ENCODE measurements at regions of chr3 and their contacts with region 1.

Region 1: DNA sequence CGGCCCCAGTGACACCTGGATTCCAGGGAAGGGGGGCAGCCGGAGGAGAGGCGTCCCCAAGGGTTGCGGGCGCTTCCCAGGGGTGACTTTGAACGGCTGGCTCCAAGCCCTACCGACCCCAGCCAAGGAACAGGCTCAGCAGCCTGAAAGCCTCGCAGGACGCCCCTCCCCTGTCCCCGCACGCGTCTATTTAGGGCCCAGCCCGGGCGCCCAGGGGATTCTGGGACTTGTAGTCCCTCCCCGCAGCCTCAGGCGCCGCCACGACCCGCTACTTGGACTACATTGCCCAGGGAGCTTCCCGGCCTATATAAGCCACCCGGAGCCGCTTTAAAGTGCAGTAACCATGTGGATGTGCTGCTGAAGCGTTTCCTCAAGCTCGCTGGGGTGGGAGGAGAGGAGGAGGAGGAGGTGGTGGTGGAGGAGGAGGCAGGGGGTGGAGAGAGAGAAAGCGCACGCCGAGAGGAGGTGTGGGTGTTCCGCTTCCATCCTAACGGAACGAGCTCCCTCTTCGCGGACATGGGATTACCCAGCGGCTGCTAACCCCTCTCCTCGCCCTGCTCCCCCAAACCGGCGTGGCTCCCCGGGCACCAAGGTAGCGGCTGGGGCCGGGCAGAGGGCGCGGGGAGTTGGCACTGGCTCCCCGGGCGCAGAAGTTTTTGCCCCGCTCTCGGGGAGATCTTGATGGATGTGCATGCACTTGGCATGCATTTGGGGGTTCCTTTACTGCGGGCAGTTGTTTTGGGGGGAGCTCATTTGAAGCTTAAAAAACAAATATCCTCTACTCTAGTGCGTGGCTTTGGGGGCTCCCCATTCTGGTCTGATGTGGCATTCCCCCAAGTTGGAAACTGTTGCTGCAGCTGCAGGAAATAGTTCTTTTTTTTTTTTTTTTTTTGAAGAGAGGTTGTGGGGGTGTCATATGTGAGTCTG is at the start of gene ITPR1:
- DNase-seq: peak; percentile 93
- ATAC-seq: peak; percentile 94
- H3K4me3 ChIP-seq: peak within 1 kb of the TSS; percentile 58 to 61
- H3K27ac ChIP-seq: peak within 1 kb of the TSS; percentile 16; the same call in 1 of the 2 replicates
- H3K4me1 ChIP-seq: peaks cover 2 to 19% of the 10 kb centered on the region in 2 experiments; a peak in 2 of 4 replicates
- H3K27me3 ChIP-seq: peaks cover 42% of the 10 kb centered on the region
- CTCF ChIP-seq: no peak
- POLR2A ChIP-seq: peak; percentile 98
- RAD21 ChIP-seq: no peak
- total RNA-seq, gene ITPR1: 9.2 TPM

Region 2: DNA sequence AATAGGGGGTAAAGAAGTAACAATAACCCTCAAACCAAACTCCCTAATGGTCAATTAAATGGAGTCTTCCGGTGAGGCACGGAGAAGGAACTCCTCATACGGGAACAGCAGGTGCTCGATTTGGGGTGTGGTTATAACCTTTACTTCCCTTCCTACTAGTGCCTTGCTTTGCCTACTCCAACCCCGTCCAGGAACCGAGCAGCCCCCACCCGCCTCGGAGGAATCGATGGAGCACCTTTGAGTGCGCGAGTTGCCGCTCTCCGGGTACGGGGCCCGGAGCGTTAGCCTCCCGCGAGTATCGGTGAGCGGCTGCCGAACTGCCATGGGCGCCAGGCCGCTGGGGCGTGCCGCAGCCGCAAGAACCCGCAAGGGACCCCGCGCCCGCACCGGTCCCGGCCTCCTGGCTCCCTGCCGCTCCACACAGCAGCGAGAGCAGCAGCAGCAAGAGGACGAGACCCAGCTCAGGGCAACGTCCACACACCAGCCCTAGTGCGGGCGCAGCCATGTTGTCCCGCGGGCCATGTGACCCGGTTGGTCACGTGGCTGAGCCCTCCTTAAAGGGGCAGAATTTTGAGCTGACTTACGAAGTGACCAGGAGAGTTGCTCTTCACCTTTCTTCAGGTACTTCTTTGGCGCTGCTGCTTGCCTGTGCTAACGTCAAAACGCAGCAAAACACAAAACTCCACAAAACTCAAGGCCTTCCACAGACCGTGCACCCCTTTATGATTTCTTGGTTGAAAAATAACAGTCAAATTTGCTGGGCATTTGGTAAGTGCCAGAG is 26.3 kb before region 1 on chr3 and contains the start of gene SUMF1:
- CTCF ChIA-PET with region 1: no interaction called
- POLR2A ChIA-PET with region 1: interaction called, 13 read pairs
- RAD21 ChIA-PET with region 1: interaction called in 1 of 2 experiments, 3 read pairs
- intact Hi-C with region 1: loop called (anchors 2 kb)
- DNase-seq: peak; percentile 59
- ATAC-seq: peak; percentile 95
- H3K4me3 ChIP-seq: peak within 1 kb of the TSS; percentile 87 to 89
- H3K27ac ChIP-seq: peak within 1 kb of the TSS; percentile 64
- H3K4me1 ChIP-seq: peaks cover 0 to 10% of the 10 kb centered on the region in 2 experiments; a peak in 2 of 4 replicates
- H3K27me3 ChIP-seq: no peaks in the 10 kb centered on the region
- CTCF ChIP-seq: no peak
- POLR2A ChIP-seq: peak; percentile 77
- RAD21 ChIP-seq: no peak
- total RNA-seq, gene SUMF1: 26.6 TPM

Region 3: DNA sequence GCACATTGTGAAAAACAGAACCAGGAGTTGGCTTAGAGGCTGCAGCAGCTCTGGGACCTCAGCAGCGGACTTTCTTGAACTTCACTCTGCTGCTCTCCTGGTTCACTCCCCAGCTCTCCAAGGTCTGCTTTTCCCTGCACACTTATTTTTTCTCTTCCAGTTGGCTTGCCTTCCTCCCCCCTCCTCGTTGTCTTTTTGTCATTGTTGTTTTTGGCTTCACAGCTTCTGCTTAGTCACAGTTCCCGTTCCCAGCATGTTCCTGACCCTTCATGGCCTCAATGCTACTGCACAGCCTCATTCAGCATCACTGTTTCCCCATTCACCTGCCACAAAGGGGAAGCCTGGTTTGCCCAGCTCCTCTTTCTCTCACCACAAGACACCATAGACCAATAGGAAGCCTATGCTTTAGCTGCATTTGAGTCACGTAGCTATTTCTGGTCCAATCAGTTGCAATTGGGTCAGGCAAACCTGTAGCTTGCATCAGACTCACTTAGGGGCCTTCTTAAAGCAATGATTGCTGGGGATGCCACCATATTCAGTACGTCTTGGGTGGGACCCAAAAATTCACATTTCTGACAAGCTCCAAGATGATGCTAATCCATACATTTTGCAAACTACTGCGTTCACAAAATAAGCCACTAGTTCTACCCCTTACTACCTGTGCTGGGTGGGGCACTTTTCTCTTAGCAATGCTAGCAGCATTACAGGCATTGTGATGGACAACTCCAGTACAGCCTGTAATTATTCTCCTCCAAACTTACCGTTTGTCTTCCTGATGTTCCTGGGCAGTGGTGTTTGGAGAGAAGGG is 18.4 kb before region 1 on chr3:
- CTCF ChIA-PET with region 1: no interaction called
- POLR2A ChIA-PET with region 1: interaction called, 12 read pairs
- RAD21 ChIA-PET with region 1: no interaction called
- intact Hi-C with region 1: no loop called
- DNase-seq: no peak
- ATAC-seq: peak; percentile 69
- H3K4me3 ChIP-seq: no peak overlapping the region
- H3K27ac ChIP-seq: no peak overlapping the region
- H3K4me1 ChIP-seq: peaks cover 7 to 9% of the 10 kb centered on the region in 2 experiments; a peak in 3 of 4 replicates
- H3K27me3 ChIP-seq: peaks cover 20% of the 10 kb centered on the region
- CTCF ChIP-seq: no peak
- POLR2A ChIP-seq: no peak
- RAD21 ChIP-seq: no peak

Region 4: DNA sequence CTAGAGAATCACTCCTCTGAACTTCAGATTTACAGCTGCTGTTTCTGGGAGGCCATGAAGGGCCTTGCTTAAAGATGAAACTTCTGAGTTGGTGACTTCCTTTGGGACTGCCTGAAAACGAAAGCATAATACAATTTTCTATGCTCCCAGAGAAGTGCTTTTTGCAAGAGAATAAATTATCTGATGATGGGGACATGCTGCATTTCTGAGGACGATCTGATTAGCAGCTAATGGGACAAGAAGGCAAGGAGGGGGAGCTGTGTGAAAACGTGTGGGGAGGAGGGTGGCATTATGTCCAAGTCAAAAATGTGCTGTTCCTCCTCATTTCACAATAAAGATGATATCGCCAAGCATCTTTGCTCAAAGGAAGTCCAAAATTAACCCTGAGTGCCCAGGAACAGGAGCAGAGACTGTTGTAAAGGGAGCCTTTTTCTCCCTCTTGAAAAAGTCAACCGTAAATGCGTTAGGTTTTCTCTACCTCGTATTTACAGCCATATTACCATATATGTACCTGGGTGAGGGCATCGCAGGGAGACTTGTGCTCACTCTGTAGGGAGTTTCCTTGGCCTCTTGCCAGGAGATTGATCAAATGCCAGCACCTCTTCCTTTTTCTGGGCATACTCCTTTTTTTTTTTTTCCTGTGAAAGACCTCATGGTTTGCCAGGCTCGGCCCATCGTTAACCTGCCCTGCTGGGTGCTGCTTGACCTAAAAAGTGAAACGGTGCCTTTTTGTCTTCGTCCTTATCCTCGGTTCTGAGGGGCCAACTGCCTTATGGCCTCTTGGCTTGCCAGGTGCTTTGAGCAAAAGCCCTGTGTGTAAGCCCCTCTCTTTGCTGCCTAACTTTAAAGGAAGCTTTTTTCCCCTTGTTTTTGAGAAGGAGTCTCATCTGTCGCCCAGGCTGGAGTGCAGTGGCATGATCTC is 11.3 kb after region 1 on chr3:
- CTCF ChIA-PET with region 1: no interaction called
- POLR2A ChIA-PET with region 1: interaction called, 13 read pairs
- RAD21 ChIA-PET with region 1: no interaction called
- intact Hi-C with region 1: no loop called
- DNase-seq: no peak
- ATAC-seq: no peak
- H3K4me3 ChIP-seq: no peak overlapping the region
- H3K27ac ChIP-seq: no peak overlapping the region
- H3K4me1 ChIP-seq: no peaks in the 10 kb centered on the region
- H3K27me3 ChIP-seq: no peaks in the 10 kb centered on the region
- CTCF ChIP-seq: no peak
- POLR2A ChIP-seq: no peak
- RAD21 ChIP-seq: no peak

Measured in HCT116 (cell line).